Activated CD4-positive, alpha-beta T cell treated with anti-CD3 and anti-CD28 coated beads for 36 hours (primary cell): ENCODE measurements at regions of chr16 and their contacts with region 1.

Region 1: DNA sequence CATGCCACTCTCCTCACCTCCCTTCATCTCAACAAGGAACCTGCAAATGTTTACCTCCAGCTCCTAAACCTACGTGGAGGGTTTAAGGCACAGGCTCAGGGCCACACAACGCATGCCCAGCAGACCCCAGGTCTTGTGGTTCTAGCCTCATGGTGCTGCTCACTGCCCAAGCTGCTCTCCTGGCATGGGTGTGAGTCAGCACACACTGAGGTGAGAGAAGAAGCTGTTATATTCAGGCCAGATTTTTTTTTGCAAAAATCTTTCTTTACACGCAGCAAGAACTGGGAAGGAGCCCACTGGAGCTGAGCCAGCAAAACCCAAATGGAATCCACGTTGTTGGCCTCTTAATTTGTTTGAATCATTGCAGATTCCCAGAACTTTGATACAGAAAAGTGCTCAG is 5.5 kb upstream of the C16orf96 start:
- DNase-seq: no peak
- ATAC-seq: no peak
- H3K4me3 Mint-ChIP-seq: no peak overlapping the region
- H3K27ac Mint-ChIP-seq: no peak overlapping the region
- H3K4me1 Mint-ChIP-seq: peaks cover 7% of the 10 kb centered on the region
- H3K27me3 Mint-ChIP-seq: no peaks in the 10 kb centered on the region

Region 2: GRCh38 chr16:4500272-4500671 is 50.3 kb before region 1 on chr16:
- CTCF ChIA-PET with region 1: interaction called, 77 read pairs
- POLR2A ChIA-PET with region 1: no interaction called
- intact Hi-C with region 1: no loop called
- DNase-seq: peak; percentile 39
- ATAC-seq: peak; percentile 89
- H3K4me3 Mint-ChIP-seq: no peak overlapping the region
- H3K27ac Mint-ChIP-seq: no peak overlapping the region
- H3K4me1 Mint-ChIP-seq: peaks cover 82% of the 10 kb centered on the region
- H3K27me3 Mint-ChIP-seq: no peaks in the 10 kb centered on the region

Region 3: DNA sequence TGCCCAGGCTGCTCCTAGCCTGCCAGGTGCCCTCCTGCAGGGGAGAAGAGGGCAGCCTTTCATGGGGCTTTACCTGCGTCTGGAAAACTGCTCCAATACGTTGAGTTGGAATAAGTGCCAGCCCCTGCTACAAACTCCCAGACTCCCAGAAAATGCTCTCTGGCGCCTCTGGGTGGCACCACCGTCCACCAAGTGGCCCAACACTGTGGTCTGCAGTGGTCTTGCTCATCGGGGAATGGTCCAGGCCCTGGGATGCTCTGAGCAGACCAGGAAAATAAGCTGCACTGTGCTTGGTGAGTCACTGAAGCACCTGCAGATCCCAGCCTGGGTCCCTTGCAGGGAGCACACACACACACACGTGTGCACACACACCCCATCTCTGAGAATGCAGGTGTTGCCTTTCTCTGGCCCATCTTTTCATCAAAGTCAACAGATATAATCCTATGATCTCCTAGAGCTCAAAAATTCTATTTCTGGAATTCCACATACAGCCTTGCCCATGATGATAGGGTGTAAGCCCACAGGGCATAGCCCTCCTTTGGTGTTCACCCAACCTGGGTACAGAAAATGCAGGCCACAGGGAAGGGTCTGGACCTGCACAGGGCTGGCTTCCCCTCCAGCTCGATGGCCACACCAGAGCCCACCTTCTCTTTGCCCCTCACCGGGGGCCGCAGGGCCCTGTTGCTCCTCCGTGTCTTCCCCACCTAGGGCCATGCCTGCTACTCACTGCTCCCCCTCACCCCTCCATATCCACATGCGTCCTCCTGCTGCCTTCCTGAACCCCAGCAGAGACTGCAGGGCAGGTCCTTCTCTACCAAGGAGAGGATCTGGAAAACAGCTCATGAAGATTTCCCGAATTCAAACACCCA is 32.5 kb before region 1 on chr16:
- CTCF ChIA-PET with region 1: interaction called, 12 read pairs
- POLR2A ChIA-PET with region 1: no interaction called
- intact Hi-C with region 1: loop called in 1 of 2 experiments (anchors 1 kb)
- DNase-seq: peak; percentile 38
- ATAC-seq: no peak
- H3K4me3 Mint-ChIP-seq: no peak overlapping the region
- H3K27ac Mint-ChIP-seq: peak overlapping the region; percentile 47
- H3K4me1 Mint-ChIP-seq: peaks cover 39% of the 10 kb centered on the region
- H3K27me3 Mint-ChIP-seq: no peaks in the 10 kb centered on the region

Region 4: DNA sequence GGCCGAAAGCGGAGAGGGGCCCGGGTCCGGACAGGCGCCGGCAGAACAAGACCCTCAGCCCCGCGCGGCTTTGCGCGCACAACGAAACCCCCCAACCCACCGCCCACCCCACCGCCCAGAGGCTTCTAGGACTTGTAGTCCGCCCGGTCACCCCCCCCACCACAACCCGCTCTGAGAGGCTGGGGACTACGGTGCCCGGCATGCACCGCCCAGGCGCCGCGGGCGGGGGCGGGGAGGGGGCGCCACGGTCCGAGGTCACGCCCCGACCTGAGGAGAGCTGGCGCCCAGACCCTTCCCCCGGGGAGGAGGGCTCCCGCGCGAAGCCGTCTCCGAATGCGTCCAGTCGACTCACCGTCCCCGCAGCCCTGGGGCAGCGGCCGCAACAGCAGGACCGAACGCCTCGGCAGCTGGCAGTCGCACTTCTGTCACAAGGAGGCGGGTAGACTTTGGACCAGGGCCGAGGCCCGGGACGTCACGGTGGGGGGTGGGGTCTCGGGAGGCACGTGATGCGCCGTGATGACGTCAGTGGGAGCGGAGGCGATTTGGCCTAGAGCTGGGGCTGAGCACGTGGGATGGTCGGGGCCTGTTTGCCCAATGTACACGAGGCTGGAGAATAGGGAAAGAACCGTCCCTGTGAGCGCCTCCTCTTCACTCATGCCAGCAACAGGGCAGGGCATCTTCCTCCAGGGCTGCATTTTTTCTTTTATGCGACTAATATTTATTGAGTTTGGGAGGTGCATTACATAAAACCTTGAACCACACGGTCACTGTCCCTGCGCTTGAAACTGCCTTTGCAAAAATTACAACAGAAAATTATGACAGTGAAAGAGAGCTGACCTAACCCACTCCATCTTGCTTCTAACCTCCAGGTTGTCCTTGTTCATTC is 12.0 kb before region 1 on chr16 and contains the start of gene CDIP1:
- CTCF ChIA-PET with region 1: interaction called, 14 read pairs
- POLR2A ChIA-PET with region 1: interaction called, 4 read pairs
- intact Hi-C with region 1: no loop called
- DNase-seq: peak; percentile 99
- ATAC-seq: peak; percentile 81
- H3K4me3 Mint-ChIP-seq: peak within 1 kb of the TSS; percentile 75
- H3K27ac Mint-ChIP-seq: peak within 1 kb of the TSS; percentile 63
- H3K4me1 Mint-ChIP-seq: peaks cover 41% of the 10 kb centered on the region
- H3K27me3 Mint-ChIP-seq: no peaks in the 10 kb centered on the region
- total RNA-seq, gene CDIP1: 28.3 to 30.2 TPM

Region 5: DNA sequence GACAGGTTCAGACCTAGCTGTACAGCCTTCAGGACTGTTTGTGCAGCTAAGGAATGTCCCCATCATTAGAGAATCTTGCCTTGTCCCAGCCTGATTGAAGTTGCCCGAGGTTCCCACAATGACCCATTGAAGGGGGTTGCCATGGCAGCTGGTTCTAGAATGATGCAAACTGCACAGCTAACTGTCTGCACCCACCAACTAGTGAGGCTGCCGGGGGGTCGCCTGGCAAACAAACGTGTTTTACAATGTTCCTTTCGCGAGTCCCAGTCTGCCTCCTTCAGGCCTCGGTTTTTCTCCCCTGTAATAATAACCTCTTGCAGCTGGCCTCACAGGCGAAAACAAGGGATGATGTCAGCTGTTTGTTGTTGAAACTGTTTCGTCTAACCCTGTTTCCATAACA is 11.0 kb after region 1 on chr16:
- CTCF ChIA-PET with region 1: interaction called, 11 read pairs
- POLR2A ChIA-PET with region 1: no interaction called
- intact Hi-C with region 1: no loop called
- DNase-seq: no peak
- ATAC-seq: no peak
- H3K4me3 Mint-ChIP-seq: no peak overlapping the region
- H3K27ac Mint-ChIP-seq: no peak overlapping the region
- H3K4me1 Mint-ChIP-seq: peaks cover 7% of the 10 kb centered on the region
- H3K27me3 Mint-ChIP-seq: no peaks in the 10 kb centered on the region

Region 6: GRCh38 chr16:5598793-5599192 is 1048.2 kb after region 1 on chr16:
- CTCF ChIA-PET with region 1: no interaction called
- POLR2A ChIA-PET with region 1: no interaction called
- intact Hi-C with region 1: no loop called
- DNase-seq: no peak
- ATAC-seq: no peak
- H3K4me3 Mint-ChIP-seq: no peak overlapping the region
- H3K27ac Mint-ChIP-seq: no peak overlapping the region
- H3K4me1 Mint-ChIP-seq: no peaks in the 10 kb centered on the region
- H3K27me3 Mint-ChIP-seq: no peaks in the 10 kb centered on the region